Panc1 (cell line): ENCODE measurements at regions of chr5 and their contacts with region 1.

Region 1: GRCh38 chr5:170111088-170111785 is 5.5 kb downstream of the FOXI1 start:
- DNase-seq: no peak
- ATAC-seq: no peak
- H3K4me3 ChIP-seq: no peak overlapping the region
- H3K27ac ChIP-seq: peak overlapping the region; percentile 80
- H3K4me1 ChIP-seq: peaks cover 34% of the 10 kb centered on the region
- H3K27me3 ChIP-seq: no peaks in the 10 kb centered on the region
- CTCF ChIP-seq: no peak

Region 2: DNA sequence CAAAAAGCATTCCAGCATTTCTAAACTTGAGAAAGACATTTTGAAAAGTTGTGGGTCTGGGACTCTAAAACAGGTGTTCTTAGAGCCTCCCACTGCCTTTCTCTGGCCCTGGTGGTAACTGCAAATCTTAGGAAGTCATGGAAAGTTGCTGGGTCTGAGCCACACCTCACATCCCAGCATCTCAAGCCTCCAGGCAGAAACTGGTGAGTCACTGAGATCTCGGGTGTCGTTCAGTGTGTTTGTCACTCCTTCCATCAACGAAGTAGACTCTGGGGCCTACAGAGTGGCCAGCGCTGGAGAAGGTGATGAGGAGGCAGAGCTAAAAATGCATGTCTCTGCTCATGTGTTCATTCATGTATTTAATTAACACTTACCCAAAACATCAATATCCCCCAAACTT is 62.0 kb after region 1 on chr5:
- CTCF ChIA-PET with region 1: no interaction called
- POLR2A ChIA-PET with region 1: no interaction called
- in situ Hi-C with region 1: no loop called
- intact Hi-C with region 1: loop called (anchors 5 kb)
- DNase-seq: no peak
- ATAC-seq: peak; percentile 76
- H3K4me3 ChIP-seq: no peak overlapping the region
- H3K27ac ChIP-seq: peak overlapping the region; percentile 82; the same call in 1 of the 2 replicates
- H3K4me1 ChIP-seq: peaks cover 37% of the 10 kb centered on the region
- H3K27me3 ChIP-seq: no peaks in the 10 kb centered on the region
- CTCF ChIP-seq: no peak